OCI-LY7 (cell line): ENCODE measurements at regions of chr13 and their contacts with region 1.

Region 1: GRCh38 chr13:35712907-35713761 is 236.6 kb upstream of the MAB21L1 start:
- DNase-seq: no peak
- H3K4me3 ChIP-seq: no peak overlapping the region
- H3K27ac ChIP-seq: no peak overlapping the region
- H3K4me1 ChIP-seq: no peaks in the 10 kb centered on the region
- CTCF ChIP-seq: no peak

Region 2: GRCh38 chr13:35573639-35574038 is 139.5 kb before region 1 on chr13:
- CTCF ChIA-PET with region 1: no interaction called
- POLR2A ChIA-PET with region 1: no interaction called
- intact Hi-C with region 1: no loop called
- DNase-seq: no peak
- H3K4me3 ChIP-seq: no peak overlapping the region
- H3K27ac ChIP-seq: no peak overlapping the region
- H3K4me1 ChIP-seq: no peaks in the 10 kb centered on the region
- CTCF ChIP-seq: no peak

Region 3: DNA sequence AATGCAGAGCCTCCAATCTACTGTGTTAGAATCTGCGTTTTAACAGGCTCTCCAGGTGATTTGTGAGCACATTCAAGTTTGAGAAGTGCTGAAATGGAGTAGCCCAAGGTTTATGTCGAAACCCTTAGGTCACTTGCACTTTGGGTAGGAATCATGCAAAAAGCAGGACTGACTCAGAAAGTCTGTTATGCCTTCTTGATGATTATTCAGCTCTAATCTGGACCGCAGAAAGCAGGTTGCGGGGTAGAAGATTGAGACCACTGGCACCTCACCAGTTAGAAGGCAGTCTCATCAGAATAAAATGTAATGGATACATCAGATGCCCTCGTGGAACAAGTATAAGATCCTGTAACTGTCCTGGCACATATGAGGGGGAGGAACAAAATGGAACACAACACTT is 91.8 kb after region 1 on chr13:
- CTCF ChIA-PET with region 1: no interaction called
- POLR2A ChIA-PET with region 1: interaction called, 11 read pairs
- intact Hi-C with region 1: no loop called
- DNase-seq: no peak
- H3K4me3 ChIP-seq: no peak overlapping the region
- H3K27ac ChIP-seq: no peak overlapping the region
- H3K4me1 ChIP-seq: no peaks in the 10 kb centered on the region
- CTCF ChIP-seq: no peak

Region 4: GRCh38 chr13:36275190-36276002 is 562.3 kb after region 1 on chr13:
- CTCF ChIA-PET with region 1: no interaction called
- POLR2A ChIA-PET with region 1: no interaction called
- intact Hi-C with region 1: no loop called
- DNase-seq: peak; percentile 35
- H3K4me3 ChIP-seq: no peak overlapping the region
- H3K27ac ChIP-seq: no peak overlapping the region
- H3K4me1 ChIP-seq: no peaks in the 10 kb centered on the region
- CTCF ChIP-seq: peak; percentile 73